Dendritic cell treated with granulocyte-macrophage colony-stimulating factor and Interleukin-4, amounts not matched to agents 40 ng/mL and 50 ng/mL, for 4 days (primary cell): ENCODE measurements at regions of chr7 and their contacts with region 1.

Region 1: DNA sequence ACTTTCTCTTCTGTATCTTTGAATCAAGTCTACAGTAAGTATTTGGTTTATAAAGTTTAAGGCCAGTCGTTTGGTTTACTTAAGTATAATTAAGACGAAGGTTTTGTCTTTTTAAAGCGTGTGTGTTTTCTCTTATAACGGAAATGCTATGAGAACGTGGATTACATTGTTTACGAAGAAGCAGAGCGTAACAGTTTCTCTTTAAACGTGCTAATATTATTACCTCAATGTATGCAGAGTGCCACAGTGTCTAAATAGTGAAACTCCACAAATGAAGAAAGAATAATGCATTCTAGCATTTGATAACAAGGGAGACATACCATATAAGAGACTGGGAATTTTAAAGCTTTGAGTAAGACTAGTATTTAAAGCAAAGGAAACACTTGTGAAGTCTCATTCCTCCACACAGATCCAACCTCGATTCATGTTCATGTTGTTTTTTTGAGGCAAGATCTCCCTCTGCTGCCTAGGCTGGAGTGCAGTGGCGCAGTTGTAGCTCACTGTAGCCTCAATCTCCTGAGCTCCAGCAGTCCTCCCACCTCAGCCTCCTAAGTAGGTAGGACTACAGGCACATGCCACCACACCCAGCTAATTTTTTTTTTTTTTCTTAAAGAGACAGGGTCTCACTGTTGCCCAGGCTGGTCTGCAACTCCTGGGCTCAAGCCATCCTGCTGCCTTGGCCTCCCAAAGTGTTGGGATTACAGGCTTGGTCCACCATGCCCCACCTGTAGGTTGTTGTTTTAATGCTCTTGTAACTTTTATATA is 75.1 kb downstream of the ANKRD61 start:
- H3K4me3 Mint-ChIP-seq: peak overlapping the region; percentile 85
- H3K27ac Mint-ChIP-seq: peak overlapping the region; percentile 78
- H3K4me1 Mint-ChIP-seq: peaks cover 18% of the 10 kb centered on the region
- H3K27me3 Mint-ChIP-seq: no peaks in the 10 kb centered on the region

Region 2: GRCh38 chr7:5997222-5997808 is 109.0 kb before region 1 on chr7:
- intact Hi-C with region 1: loop called (anchors 1 kb)
- H3K4me3 Mint-ChIP-seq: no peak overlapping the region
- H3K27ac Mint-ChIP-seq: no peak overlapping the region
- H3K4me1 Mint-ChIP-seq: no peaks in the 10 kb centered on the region
- H3K27me3 Mint-ChIP-seq: no peaks in the 10 kb centered on the region